Mucosa of descending colon (tissue), 3 donors: ENCODE measurements at regions of chr11 and their contacts with region 1.

Region 1: DNA sequence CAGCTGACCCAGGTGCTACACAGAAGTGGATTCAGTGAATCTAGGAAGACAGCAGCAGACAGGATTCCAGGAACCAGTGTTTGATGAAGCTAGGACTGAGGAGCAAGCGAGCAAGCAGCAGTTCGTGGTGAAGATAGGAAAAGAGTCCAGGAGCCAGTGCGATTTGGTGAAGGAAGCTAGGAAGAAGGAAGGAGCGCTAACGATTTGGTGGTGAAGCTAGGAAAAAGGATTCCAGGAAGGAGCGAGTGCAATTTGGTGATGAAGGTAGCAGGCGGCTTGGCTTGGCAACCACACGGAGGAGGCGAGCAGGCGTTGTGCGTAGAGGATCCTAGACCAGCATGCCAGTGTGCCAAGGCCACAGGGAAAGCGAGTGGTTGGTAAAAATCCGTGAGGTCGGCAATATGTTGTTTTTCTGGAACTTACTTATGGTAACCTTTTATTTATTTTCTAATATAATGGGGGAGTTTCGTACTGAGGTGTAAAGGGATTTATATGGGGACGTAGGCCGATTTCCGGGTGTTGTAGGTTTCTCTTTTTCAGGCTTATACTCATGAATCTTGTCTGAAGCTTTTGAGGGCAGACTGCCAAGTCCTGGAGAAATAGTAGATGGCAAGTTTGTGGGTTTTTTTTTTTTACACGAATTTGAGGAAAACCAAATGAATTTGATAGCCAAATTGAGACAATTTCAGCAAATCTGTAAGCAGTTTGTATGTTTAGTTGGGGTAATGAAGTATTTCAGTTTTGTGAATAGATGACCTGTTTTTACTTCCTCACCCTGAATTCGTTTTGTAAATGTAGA is 1.7 kb downstream of the MALAT1 start:
- DNase-seq: peak; percentile 51 to 62 (median 57)
- ATAC-seq: no peak
- H3K4me3 ChIP-seq: peak overlapping the region; percentile 76
- H3K4me1 ChIP-seq: peaks cover 13% of the 10 kb centered on the region
- CTCF ChIP-seq: no peak

Region 2: GRCh38 chr11:65421803-65422690 is 78.5 kb before region 1 on chr11:
- intact Hi-C with region 1: loop called (anchors 5 kb)
- DNase-seq: peak; percentile 98 to 99 (median 99)
- ATAC-seq: peak; percentile 49
- H3K4me3 ChIP-seq: peak overlapping the region; percentile 81
- H3K4me1 ChIP-seq: peaks cover 48% of the 10 kb centered on the region
- CTCF ChIP-seq: no peak

Region 3: GRCh38 chr11:65569973-65570918 is 69.7 kb after region 1 on chr11 and contains the start of gene ZNRD2:
- intact Hi-C with region 1: no loop called
- DNase-seq: peak; percentile 97 to 100 (median 97)
- ATAC-seq: peak; percentile 79
- H3K4me3 ChIP-seq: peak within 1 kb of the TSS; percentile 54
- H3K4me1 ChIP-seq: peaks cover 53% of the 10 kb centered on the region
- CTCF ChIP-seq: peak; percentile 32
- total RNA-seq, gene ZNRD2: 20.9 to 24.6 (median 21.0) TPM